Dendritic cell treated with granulocyte-macrophage colony-stimulating factor and Interleukin-4, amounts not matched to agents 40 ng/mL and 50 ng/mL, for 4 days (primary cell): ENCODE measurements at regions of chr9 and their contacts with region 1.

Region 1: GRCh38 chr9:117704024-117704575 is at the start of gene TLR4:
- H3K4me3 Mint-ChIP-seq: peak within 1 kb of the TSS; percentile 98
- H3K27ac Mint-ChIP-seq: peak within 1 kb of the TSS; percentile 98
- H3K4me1 Mint-ChIP-seq: peaks cover 67% of the 10 kb centered on the region
- H3K27me3 Mint-ChIP-seq: no peaks in the 10 kb centered on the region

Region 2: DNA sequence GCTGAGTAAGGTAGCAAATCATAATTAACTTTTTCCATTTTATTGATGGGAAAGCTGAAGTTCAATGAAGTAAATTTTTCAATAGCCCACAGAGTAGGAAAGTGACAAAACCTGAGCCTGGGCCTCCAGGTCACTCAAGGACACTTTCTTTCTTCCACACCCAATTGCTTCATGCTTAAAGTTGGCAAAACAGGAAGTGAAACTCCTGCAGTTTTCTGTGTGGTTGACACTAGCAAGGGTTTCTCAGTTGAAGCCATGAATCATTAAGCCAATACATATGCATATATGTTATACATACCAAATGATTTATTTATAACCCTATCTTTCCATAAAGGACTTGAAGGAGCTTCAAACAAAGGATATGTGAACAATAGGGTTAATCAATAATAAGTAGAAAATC is 14.0 kb after region 1 on chr9:
- intact Hi-C with region 1: loop called (anchors 1 kb)
- H3K4me3 Mint-ChIP-seq: no peak overlapping the region
- H3K27ac Mint-ChIP-seq: peak overlapping the region; percentile 79
- H3K4me1 Mint-ChIP-seq: peaks cover 70% of the 10 kb centered on the region
- H3K27me3 Mint-ChIP-seq: no peaks in the 10 kb centered on the region

Region 3: DNA sequence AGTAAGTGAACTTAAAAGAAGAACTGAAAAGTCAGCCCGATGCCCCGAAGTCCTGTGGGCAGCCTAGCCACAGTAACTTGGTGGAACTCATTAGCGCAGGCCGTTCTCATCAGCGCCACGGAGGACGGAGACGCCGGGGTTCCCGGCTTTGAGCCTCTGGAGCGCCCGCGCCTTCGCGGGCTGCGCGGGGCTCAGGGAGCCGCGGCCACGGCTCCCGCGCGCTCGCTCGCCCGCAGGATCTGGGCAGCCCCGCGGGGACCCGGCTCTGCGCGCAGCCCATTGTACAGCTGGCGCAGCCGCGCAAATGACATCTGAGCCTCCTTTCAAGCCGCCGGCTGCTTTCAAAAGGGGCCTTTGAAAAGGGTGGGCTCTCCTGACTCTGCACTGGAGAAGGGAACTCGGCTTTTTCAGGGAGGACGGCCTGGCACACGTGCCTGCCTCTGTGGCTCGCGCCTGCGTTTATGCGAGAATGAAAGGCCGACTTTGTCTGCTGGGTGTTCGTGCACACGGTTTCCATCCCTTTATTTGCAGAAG is 40.8 kb after region 1 on chr9:
- intact Hi-C with region 1: loop called (anchors 5 kb)
- H3K4me3 Mint-ChIP-seq: peak overlapping the region; percentile 72
- H3K27ac Mint-ChIP-seq: peak overlapping the region; percentile 78
- H3K4me1 Mint-ChIP-seq: peaks cover 25% of the 10 kb centered on the region
- H3K27me3 Mint-ChIP-seq: peaks cover 23% of the 10 kb centered on the region